Cardiac septum (tissue), 1 donor: ENCODE measurements at regions of chr1 and their contacts with region 1.

Region 1: GRCh38 chr1:154272217-154272998 is at the start of gene HAX1:
- DNase-seq: peak; percentile 97
- total RNA-seq, gene HAX1: 132 TPM

Region 2: DNA sequence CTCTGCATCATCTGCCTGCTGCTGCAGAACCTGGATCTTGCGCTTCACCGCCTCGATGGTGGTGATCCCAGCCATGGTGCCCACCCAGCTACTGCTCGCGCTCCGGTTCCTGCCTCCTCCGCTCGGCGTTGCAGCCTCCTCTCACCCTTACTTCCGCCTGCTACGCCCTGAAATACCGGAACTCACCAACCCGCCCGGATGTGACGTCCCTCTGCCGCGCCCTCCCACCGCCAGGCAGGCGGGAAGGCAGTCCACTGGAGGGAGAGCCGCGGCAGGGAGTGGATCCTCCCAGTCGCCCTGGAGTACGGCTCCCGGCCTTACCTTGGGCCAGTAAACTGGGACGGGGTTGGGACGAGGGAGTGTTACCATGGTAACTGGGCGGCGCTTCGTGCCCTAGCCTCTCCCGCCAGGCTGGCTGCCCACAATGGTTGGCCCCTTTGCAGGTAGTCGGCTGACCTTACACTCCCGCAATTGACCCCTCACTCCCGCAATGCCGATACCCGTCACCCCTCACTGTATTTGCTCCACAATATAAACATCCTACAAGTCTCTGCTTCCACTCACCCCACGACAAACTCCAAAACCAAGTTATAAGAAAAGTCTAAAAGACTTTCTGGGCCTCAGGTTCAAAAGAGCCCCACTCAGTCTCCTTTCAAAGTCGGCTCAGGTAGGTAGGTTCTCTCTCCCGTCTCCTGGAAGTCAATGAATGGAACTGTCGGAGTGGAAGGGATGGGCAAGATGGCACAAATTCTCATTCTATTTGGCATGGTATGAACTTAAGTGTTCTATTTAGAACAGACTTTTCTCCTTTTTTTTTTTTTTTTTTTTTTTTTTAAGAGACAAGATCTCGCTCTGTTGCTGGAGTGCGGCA is 89.1 kb before region 1 on chr1:
- intact Hi-C with region 1: loop called (anchors 2 kb)
- DNase-seq: peak; percentile 98

Region 3: DNA sequence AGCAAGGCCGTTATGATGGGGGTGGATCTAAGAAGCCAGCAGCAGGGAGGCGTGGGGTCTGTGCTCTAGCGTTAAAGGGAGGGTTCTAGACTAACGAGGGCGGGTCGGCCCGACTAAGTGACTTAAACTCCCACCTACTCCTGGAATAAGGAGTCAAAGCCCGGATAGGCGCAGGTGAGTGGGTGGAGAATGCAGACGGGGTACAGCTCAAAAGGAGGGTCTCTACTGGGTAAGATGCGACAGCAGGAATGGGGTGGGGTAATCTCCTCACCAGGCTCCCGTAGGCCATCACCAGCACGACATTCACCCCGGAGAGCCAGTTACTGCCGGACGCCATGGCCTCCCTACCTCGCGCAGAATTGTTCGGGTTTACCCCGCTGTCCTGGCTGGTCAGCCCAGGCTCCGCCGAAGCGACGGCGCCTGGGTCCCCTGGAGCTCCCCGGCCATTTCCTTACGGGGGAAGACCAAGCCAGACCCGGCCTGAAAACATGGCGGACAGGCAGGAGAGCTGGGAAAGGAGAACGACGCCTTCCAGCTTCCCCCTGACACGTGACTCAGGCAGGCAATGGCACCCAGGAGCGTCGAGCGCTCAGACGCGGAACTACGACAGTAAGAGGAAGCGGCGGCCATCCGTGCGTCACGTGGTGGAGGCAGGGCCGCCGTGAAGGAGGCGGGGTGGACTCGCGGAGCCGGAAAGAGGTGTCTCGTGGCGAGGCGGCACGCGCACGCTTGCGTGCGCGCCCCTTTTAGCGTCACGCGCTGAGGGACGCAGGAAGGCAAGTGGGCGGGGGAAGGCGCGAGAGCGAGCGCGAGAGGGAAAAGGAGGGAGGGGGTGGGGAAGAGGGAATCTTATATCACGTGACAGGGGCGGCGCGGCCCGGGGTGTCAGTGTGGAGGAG is 52.1 kb before region 1 on chr1 and contains the start of gene UBAP2L:
- intact Hi-C with region 1: loop called (anchors 5 kb)
- DNase-seq: peak; percentile 100
- total RNA-seq, gene UBAP2L: 111 TPM

Region 4: DNA sequence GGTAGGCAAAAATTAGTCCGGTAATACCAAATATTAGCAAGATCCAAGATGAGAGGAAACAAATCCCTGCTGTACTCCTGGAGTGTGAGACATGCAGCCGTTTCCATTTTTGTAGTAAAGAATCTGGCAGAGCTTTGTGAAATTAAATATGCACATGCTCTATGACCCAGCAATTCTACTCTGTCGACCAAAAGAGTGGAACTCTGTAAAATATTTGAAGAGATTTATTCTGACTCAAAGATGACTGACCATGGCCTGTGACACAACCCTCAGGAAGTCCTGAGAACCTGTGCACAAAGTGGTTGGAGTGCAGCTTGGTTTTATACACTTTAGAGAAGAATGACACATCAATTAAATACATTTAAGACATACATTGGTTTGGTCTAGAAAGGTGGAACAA is 16.3 kb after region 1 on chr1:
- intact Hi-C with region 1: no loop called
- DNase-seq: no peak

Region 5: GRCh38 chr1:154324669-154325582 is 52.5 kb after region 1 on chr1 and contains the start of gene ATP8B2:
- intact Hi-C with region 1: loop called (anchors 1 kb)
- DNase-seq: peak; percentile 91
- total RNA-seq, gene ATP8B2: 22.5 TPM

Region 6: GRCh38 chr1:154335025-154335714 is 62.8 kb after region 1 on chr1:
- intact Hi-C with region 1: loop called (anchors 2 kb)
- DNase-seq: peak; percentile 86